Activated CD4-positive, alpha-beta memory T cell treated with anti-CD3 and anti-CD28 coated beads for 36 hours (primary cell): ENCODE measurements at regions of chr19 and their contacts with region 1.

Region 1: DNA sequence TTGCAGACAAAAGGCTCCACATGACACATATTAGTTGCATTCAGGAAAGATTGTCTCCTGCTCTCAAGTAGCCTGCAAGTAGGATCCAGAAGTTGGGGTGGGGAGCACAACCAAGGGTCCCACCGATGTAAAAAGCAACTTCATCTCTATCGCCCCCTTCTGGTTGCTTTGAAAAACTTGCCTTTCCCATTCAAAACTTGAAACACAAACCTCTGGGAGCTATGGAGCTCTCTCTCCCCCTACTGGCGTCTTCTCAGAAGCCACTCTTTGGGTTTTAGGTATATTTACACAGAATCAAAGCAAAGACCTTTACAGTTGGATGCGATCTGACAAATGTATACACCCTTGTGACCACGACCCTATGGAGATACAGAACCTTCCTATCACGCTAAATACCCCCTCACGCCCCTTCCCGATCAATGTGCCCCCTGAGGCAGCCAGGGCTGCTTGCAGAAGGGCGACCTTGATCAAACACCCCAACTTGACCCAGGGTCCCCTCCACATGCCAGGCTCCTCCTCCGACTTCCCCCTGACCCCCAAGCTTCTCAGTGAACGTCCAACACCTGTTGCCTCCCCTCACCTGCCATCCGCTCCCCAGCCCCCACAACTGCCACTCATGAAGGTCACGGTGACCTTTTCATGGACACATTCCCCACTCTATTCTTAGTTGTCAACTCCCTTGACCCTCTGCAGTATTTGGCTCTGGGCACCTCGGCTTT is 10.1 kb downstream of the NOSIP start:
- DNase-seq: peak; percentile 81
- H3K4me3 Mint-ChIP-seq: peak overlapping the region; percentile 37
- H3K27ac Mint-ChIP-seq: peak overlapping the region; percentile 85
- H3K4me1 Mint-ChIP-seq: peaks cover 47% of the 10 kb centered on the region
- H3K27me3 Mint-ChIP-seq: no peaks in the 10 kb centered on the region

Region 2: DNA sequence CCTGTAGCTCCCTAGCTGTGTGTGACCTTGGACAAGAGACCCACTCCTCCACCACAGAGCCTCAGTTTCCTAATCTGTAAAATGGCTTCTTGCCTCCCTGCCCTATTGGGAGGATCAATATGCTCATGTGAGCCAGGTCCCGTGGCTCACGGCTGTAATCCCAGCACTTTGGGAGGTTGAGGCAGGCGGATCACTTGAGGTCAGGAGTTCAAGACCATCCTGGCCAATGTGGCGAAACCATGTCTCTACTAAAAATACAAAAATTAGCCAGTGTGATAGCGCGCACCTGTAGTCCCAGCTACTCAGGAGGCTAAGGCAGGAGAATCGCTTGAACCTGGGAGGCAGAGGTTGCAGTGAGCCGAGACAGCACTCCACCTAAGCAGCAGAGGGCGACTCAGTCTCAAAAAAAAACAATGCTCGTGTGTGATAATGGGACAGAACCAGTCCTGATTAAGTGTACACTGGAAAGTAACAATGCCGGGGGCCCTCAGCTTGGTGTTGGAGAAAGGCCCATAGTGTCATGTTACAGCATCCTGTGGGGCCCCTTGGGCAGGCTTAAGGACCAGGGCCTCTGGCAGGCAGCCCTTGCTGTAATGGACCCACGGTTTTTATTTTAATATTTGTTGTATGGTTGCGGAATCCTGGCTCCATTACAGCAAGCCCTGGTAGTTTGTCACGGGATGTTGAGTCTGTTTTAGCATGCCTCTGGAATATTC is 67.3 kb before region 1 on chr19:
- CTCF ChIA-PET with region 1: interaction called, 202 read pairs
- POLR2A ChIA-PET with region 1: interaction called, 4 read pairs
- intact Hi-C with region 1: loop called (anchors 1 kb)
- DNase-seq: peak; percentile 64
- H3K4me3 Mint-ChIP-seq: no peak overlapping the region
- H3K27ac Mint-ChIP-seq: peak overlapping the region; percentile 51
- H3K4me1 Mint-ChIP-seq: peaks cover 45% of the 10 kb centered on the region
- H3K27me3 Mint-ChIP-seq: no peaks in the 10 kb centered on the region

Region 3: GRCh38 chr19:49533551-49534488 is 36.5 kb before region 1 on chr19:
- CTCF ChIA-PET with region 1: interaction called, 30 read pairs
- POLR2A ChIA-PET with region 1: no interaction called
- intact Hi-C with region 1: no loop called
- DNase-seq: peak; percentile 83
- H3K4me3 Mint-ChIP-seq: peak overlapping the region; percentile 75
- H3K27ac Mint-ChIP-seq: no peak overlapping the region
- H3K4me1 Mint-ChIP-seq: peaks cover 20% of the 10 kb centered on the region
- H3K27me3 Mint-ChIP-seq: no peaks in the 10 kb centered on the region

Region 4: GRCh38 chr19:49555600-49556411 is 14.5 kb before region 1 on chr19:
- CTCF ChIA-PET with region 1: interaction called, 171 read pairs
- POLR2A ChIA-PET with region 1: interaction called, 6 read pairs
- intact Hi-C with region 1: loop called (anchors 1 kb)
- DNase-seq: peak; percentile 91
- H3K4me3 Mint-ChIP-seq: peak overlapping the region; percentile 43
- H3K27ac Mint-ChIP-seq: peak overlapping the region; percentile 95
- H3K4me1 Mint-ChIP-seq: peaks cover 73% of the 10 kb centered on the region
- H3K27me3 Mint-ChIP-seq: no peaks in the 10 kb centered on the region

Region 5: DNA sequence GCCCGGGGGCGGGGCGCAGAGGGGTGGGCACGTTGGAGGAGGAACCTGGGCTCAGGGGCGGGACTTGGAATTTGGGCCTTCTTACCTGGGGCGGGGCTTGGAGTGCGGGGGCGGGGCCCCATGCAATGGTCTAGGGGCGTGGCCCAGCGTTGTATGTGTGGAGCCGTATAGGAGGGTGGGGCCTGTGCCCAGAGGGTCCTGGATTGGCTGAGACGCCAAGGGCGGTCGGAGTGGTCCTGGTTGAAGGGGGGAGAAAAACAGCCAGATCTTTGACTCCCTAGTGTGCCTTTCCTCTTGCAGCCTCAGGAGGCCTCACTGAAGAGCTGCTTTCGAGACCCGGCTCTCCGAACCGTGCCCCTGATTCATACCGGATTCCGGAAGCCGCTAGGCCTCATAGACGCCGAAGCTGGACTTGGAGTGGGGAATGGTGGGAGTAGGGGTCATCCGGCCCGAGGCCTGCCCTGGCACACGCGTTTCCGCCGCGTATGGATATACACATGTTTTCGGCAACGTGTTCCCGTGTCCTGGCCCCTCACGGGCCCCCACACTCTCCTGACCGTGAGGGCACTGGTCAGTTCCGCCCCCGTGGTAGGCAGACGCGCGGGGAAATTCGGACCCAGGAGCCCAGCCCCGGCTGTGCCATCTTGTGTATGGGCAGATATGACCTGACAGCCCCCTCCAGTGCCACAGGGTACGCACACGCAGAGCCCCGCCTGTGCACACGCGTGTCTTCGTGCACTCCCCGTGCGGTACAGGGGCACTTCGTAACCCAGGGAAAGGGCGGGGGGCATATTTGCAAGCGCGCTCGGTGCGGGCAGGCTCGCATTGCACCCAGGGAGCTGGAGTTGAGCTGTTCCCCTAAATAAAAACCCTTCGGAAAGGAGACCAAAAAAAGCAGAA is 20.0 kb after region 1 on chr19:
- CTCF ChIA-PET with region 1: interaction called, 17 read pairs
- POLR2A ChIA-PET with region 1: interaction called, 4 read pairs
- intact Hi-C with region 1: loop called (anchors 2 kb)
- DNase-seq: peak; percentile 97
- H3K4me3 Mint-ChIP-seq: peak overlapping the region; percentile 80
- H3K27ac Mint-ChIP-seq: peak overlapping the region; percentile 91
- H3K4me1 Mint-ChIP-seq: peaks cover 32% of the 10 kb centered on the region
- H3K27me3 Mint-ChIP-seq: no peaks in the 10 kb centered on the region